ENCODE measurements at regions of chr2 and their contacts with region 1.

Region 1: GRCh38 chr2:155310589-155310988 is 612.1 kb downstream of the KCNJ3 start:
- DNase-seq: peak; percentile 50 to 79 (median 67)
- H3K4me3 ChIP-seq: no peak overlapping the region
- H3K27ac ChIP-seq: no peak overlapping the region
- H3K4me1 ChIP-seq: no peaks in the 10 kb centered on the region
- H3K27me3 ChIP-seq: no peaks in the 10 kb centered on the region

Region 2: GRCh38 chr2:154402218-154402617 is 908.4 kb before region 1 on chr2:
- CTCF ChIA-PET with region 1: interaction called, 10 read pairs
- POLR2A ChIA-PET with region 1: no interaction called
- DNase-seq: peak; percentile 35 to 65 (median 64)
- H3K4me3 ChIP-seq: no peak overlapping the region
- H3K27ac ChIP-seq: no peak overlapping the region
- H3K4me1 ChIP-seq: no peaks in the 10 kb centered on the region
- H3K27me3 ChIP-seq: no peaks in the 10 kb centered on the region

Region 3: DNA sequence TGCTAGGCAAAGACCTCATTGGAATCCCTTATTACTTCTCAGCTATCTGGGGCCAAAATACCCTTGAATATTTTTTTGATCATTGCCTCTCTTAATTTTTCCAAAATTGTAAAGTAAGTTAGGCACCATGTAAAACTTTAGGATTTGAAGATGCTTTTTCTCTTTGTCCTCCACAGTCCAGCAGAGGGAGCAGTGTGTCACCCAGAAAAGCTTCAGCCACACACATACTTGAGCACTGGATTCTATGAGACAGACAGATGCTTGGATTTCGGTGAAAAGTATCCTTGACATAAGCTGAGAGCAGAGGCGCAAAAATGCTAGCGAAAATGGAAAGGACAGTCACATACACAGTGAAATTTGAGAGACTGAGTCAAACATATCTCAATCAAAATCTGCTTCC is 686.8 kb before region 1 on chr2:
- CTCF ChIA-PET with region 1: interaction called, 12 read pairs
- POLR2A ChIA-PET with region 1: no interaction called
- DNase-seq: peak; percentile 32 to 75 (median 61)
- H3K4me3 ChIP-seq: no peak overlapping the region
- H3K27ac ChIP-seq: no peak overlapping the region
- H3K4me1 ChIP-seq: no peaks in the 10 kb centered on the region
- H3K27me3 ChIP-seq: no peaks in the 10 kb centered on the region

Region 4: GRCh38 chr2:155250800-155251199 is 59.8 kb before region 1 on chr2:
- CTCF ChIA-PET with region 1: no interaction called
- POLR2A ChIA-PET with region 1: no interaction called
- DNase-seq: peak; percentile 3 to 21 (median 19)
- H3K4me3 ChIP-seq: no peak overlapping the region
- H3K27ac ChIP-seq: no peak overlapping the region
- H3K4me1 ChIP-seq: peaks cover 0 to 2% (median 0%) of the 10 kb centered on the region in 4 experiments
- H3K27me3 ChIP-seq: no peaks in the 10 kb centered on the region

Region 5: DNA sequence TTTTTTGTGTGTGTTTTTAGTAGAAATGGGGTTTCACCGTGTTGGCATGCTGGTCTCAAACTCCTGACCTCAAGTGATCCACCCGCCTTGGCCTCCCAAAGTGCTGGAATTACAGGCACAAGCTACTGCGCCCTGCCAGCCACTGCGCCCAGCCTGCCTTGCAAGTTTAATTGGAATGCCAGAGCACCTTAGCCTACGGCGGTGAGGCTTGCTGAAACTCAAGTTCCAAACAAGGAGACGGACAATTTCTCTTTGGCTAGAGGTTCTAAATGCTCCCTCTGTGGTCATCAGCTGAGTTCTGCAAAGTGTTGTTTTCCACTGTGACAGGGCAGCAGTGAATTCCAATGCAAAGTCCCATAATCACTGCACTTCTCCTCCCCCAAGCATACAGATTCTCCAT is 28.7 kb before region 1 on chr2:
- CTCF ChIA-PET with region 1: no interaction called
- POLR2A ChIA-PET with region 1: no interaction called
- DNase-seq: no peak
- H3K4me3 ChIP-seq: no peak overlapping the region
- H3K27ac ChIP-seq: no peak overlapping the region
- H3K4me1 ChIP-seq: no peaks in the 10 kb centered on the region
- H3K27me3 ChIP-seq: no peaks in the 10 kb centered on the region